ENCODE measurements at regions of chr6 and their contacts with region 1.

Region 1: DNA sequence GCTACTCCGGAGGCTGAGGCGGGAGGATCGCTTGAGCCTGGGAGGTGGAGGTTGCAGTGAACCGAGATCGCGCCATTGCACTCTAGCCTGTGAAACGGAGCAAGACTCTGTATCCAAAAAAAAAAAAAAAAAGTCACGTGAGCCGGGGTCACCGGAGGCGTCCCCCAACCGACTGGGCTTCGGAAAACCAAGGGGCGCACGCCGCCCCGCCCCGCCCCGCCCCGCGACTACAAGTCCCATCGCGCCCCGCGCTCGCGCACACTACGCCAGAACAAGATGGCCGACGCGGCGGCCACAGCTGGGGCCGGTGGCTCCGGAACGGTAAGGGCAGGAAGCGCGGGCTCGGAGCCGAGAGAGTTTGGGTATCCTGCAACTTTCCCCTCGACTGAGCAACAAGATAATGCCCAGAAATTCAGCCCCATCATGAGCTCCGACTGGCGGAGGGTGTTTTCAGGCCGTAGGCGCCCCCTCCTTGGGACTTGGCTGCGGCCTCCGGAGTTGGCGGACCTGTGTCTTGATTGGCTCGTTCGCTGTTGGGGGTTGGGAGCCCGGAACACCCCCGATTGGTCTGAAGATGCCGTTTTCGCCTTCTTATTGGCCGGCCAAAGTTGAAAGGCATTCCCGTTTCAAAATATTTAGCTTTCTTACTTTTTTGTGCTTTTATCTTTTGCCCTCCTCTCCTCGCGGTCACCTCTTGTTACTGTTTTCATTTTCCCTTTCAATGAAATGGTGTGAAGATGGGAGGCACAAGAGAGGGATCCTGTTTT is at the start of gene TAF8:
- DNase-seq: peak; percentile 95
- ATAC-seq: peak; percentile 81
- H3K4me3 Mint-ChIP-seq: peak within 1 kb of the TSS; percentile 95
- H3K27ac Mint-ChIP-seq: peak within 1 kb of the TSS; percentile 99
- H3K4me1 Mint-ChIP-seq: peaks cover 67% of the 10 kb centered on the region
- H3K27me3 Mint-ChIP-seq: no peaks in the 10 kb centered on the region
- total RNA-seq, gene TAF8: 44.1 TPM

Region 2: DNA sequence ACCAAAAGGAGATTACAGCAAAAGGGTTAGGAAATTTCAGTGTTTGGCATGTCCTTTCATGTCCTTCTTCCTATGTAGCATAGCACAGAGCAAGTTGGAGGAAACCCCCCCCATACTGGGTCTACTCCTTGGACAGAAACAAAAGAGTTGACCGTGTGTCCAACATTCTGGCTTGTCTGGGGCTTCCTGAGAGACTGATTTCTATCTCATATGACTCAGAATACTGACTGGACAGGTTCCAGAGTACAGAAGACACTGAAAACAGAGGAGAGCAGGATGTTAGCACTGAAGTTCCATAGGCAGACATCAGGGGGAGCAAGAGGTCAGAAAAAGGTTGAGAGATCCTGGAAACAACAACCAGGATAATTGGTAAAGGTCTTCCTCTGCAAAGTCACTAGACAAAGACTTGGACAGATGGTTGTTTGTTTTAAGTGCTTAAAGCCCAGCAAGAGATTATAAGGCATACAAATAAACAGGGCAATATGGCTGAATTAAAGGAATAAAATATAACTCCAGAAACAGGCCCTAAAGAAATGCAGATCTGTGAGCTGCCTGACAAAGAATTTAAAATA is 203.7 kb before region 1 on chr6:
- CTCF ChIA-PET with region 1: interaction called, 154 read pairs
- POLR2A ChIA-PET with region 1: interaction called, 4 read pairs
- DNase-seq: peak; percentile 65
- ATAC-seq: peak; percentile 81
- H3K4me3 Mint-ChIP-seq: no peak overlapping the region
- H3K27ac Mint-ChIP-seq: no peak overlapping the region
- H3K4me1 Mint-ChIP-seq: peaks cover 9% of the 10 kb centered on the region
- H3K27me3 Mint-ChIP-seq: no peaks in the 10 kb centered on the region

Region 3: GRCh38 chr6:41895300-41896233 is 154.9 kb before region 1 on chr6 and contains the start of gene USP49:
- CTCF ChIA-PET with region 1: interaction called, 44 read pairs
- POLR2A ChIA-PET with region 1: interaction called, 10 read pairs
- DNase-seq: peak; percentile 94
- ATAC-seq: peak; percentile 97
- H3K4me3 Mint-ChIP-seq: no peak within 1 kb of the TSS
- H3K27ac Mint-ChIP-seq: peak within 1 kb of the TSS; percentile 78
- H3K4me1 Mint-ChIP-seq: peaks cover 17% of the 10 kb centered on the region
- H3K27me3 Mint-ChIP-seq: no peaks in the 10 kb centered on the region
- total RNA-seq, gene USP49: 6.2 to 7.8 TPM

Region 4: DNA sequence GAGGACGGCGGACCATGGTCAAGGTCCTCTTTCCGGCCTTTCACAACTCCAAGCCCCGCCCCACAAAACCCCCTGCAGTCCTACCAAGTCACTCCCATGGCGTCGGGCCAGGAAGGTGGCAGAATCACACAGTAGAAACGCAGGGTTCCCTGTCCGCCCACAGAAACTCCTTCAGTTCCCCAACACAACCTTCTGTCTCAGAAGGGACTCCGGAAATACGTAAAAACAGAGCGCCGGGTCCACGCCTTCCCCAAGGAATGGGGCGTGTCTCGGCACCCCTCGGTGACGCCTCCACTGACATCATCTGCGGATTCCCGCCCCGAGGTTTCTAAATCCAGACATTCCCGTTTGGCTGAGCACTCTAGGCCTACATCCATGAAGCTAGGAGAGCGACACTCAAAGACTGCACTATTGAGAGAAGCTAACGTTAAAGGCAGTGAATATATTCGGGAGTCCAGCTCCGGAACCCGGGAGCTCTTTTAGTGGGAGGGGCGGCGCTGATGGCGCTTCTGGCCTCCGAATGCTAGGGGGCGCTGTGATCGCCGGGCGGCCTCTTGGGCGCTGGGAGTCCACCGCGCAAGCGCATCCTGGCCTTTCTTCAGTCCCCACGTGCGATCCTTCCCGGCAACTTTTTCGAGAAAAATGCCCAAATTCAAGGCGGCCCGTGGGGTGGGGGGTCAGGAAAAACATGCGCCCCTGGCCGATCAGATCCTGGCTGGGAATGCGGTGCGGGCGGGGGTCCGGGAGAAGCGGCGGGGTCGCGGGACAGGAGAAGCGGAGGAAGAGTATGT is 129.3 kb before region 1 on chr6 and contains the starts of genes BYSL and MED20:
- CTCF ChIA-PET with region 1: interaction called, 232 read pairs
- POLR2A ChIA-PET with region 1: interaction called, 18 read pairs
- DNase-seq: peak; percentile 95
- ATAC-seq: peak; percentile 90
- H3K4me3 Mint-ChIP-seq: peak within 1 kb of the TSS; percentile 98
- H3K27ac Mint-ChIP-seq: peak within 1 kb of the TSS; percentile 98
- H3K4me1 Mint-ChIP-seq: peaks cover 52% of the 10 kb centered on the region
- H3K27me3 Mint-ChIP-seq: no peaks in the 10 kb centered on the region
- total RNA-seq, gene BYSL: 39.4 to 43.1 TPM
- total RNA-seq, gene MED20: 20.6 to 22.3 TPM

Measured in activated CD8-positive, alpha-beta T cell treated with anti-CD3 and anti-CD28 coated beads, Interleukin-2, amount 10 ng/mL, durations not matched to agents 7 days and 5 days (primary cell).